Thyroid gland (tissue), 4 donors: ENCODE measurements at regions of chr10 and their contacts with region 1.

Region 1: GRCh38 chr10:110225756-110226542 is 18.5 kb downstream of the MXI1 start:
- DNase-seq: peak; percentile 92 to 94
- H3K4me3 ChIP-seq: peak overlapping the region; percentile 53 to 79 (median 69)
- H3K27ac ChIP-seq: peak overlapping the region; percentile 81 to 91 (median 89)
- H3K4me1 ChIP-seq: peaks cover 11 to 37% of the 10 kb centered on the region in 2 donors
- H3K27me3 ChIP-seq: no peaks in the 10 kb centered on the region
- CTCF ChIP-seq: peak; percentile 16 to 89 (median 64)
- POLR2A ChIP-seq: peak; percentile 26 to 74

Region 2: GRCh38 chr10:110279407-110279986 is 53.5 kb after region 1 on chr10:
- intact Hi-C with region 1: loop called (anchors 10 kb)
- DNase-seq: peak; percentile 69 to 71
- H3K4me3 ChIP-seq: no peak overlapping the region
- H3K27ac ChIP-seq: peak overlapping the region; percentile 39 to 62 (median 58)
- H3K4me1 ChIP-seq: peaks cover 9 to 22% of the 10 kb centered on the region in 2 donors
- H3K27me3 ChIP-seq: no peaks in the 10 kb centered on the region
- CTCF ChIP-seq: peak; percentile 56 to 92 (median 76)
- POLR2A ChIP-seq: no peak